ENCODE measurements at regions of chr10 and their contacts with region 1.

Region 1: DNA sequence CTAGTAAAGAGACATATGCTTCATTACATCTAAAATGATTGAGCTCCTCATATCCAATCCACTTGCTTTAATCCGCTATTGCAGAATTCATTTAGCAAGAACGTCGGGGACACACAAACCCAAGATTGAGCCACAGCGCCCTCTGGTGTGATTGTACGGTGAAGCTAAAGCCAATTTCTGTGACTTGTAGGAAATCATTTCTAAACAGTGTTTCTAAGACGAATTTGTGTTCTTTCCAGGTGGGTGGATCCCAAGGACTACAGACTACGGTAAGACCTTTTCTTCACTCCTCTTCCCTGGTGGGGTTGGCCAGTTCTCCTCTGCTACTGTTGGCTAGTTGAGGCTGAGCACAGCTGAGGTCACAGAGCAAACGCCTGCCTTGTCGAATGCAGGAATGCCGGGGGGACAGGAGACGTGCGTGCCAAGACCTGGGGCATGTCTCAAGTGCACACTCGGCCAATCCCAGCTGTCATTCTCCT is 5.2 kb downstream of the DMBT1 start:
- DNase-seq: peak; percentile 30 to 91 (median 79)
- H3K4me3 ChIP-seq: peak overlapping the region in 57 of 59 donors; percentile 5 to 69 (median 45)
- H3K27ac ChIP-seq: peak overlapping the region in 15 of 59 donors; percentile 0 to 75 (median 31)
- H3K27me3 ChIP-seq: peaks cover 0 to 8% (median 0%) of the 10 kb centered on the region in 45 donors
- CTCF ChIP-seq: peak; percentile 65 to 96 (median 89)

Region 2: GRCh38 chr10:122148876-122149560 is 416.7 kb before region 1 on chr10:
- intact Hi-C with region 1: loop called in 1 of 2 experiments (anchors 5 kb)
- DNase-seq: no peak
- H3K4me3 ChIP-seq: no peak overlapping the region
- H3K27ac ChIP-seq: peak overlapping the region in 27 of 59 donors; percentile 1 to 70 (median 37)
- H3K27me3 ChIP-seq: no peaks in the 10 kb centered on the region
- CTCF ChIP-seq: no peak

Region 3: DNA sequence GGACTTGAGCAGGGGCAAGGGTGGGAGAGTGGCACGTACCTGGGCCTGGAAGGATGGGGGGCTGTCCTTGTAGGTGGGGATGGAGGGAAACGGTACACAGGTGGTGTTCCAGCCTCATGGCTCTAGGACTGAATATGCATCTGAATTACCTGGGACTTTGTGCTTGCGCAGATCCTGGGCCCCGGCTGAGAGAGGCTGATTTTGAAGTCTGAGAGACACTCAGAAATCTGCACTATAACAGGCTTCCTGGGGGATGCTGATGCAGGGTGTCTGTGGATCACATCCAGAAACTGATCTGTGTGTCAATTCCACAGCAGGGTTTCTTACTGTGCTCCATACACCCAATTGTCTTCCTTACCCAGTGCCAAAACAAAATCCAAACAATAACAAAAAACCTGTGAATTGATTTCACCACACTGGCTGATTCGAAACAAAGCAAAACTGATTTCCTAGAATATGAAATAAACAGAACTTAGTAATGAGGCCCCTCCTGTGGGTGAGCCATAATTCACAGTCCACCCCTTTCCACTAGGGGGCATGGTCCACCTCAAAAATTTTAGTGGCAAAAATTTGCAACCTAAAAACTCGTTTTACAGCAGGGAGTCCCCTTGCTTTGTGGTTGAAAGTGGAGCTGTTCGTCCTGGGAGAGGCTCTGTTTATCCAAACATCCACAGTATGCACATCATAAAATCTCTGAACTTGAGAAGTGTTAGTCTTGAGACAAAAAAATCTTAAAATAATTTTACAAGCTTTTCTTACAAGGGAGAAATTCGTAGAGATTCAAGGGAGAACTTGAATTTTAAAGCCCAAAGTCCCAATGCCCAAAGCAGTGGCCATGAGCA is 223.3 kb before region 1 on chr10:
- intact Hi-C with region 1: loop called in 1 of 2 experiments (anchors 5 kb)
- DNase-seq: peak in 4 of 10 donors; percentile 9 to 63 (median 40)
- H3K4me3 ChIP-seq: no peak overlapping the region
- H3K27ac ChIP-seq: peak overlapping the region in 57 of 59 donors; percentile 3 to 98 (median 78)
- H3K27me3 ChIP-seq: no peaks in the 10 kb centered on the region
- CTCF ChIP-seq: peak; percentile 75 to 95 (median 90)

Region 4: GRCh38 chr10:122461367-122461728 is 104.4 kb before region 1 on chr10 and contains the start of gene HTRA1:
- intact Hi-C with region 1: loop called (anchors 5 to 10 kb)
- DNase-seq: peak; percentile 40 to 92 (median 84)
- H3K4me3 ChIP-seq: peak within 1 kb of the TSS; percentile 49 to 94 (median 84)
- H3K27ac ChIP-seq: peak within 1 kb of the TSS; percentile 74 to 98 (median 92)
- H3K27me3 ChIP-seq: no peaks in the 10 kb centered on the region
- CTCF ChIP-seq: no peak
- total RNA-seq, gene HTRA1: 154 to 492 (median 263) TPM

Region 5: GRCh38 chr10:122703439-122704118 is 137.8 kb after region 1 on chr10:
- intact Hi-C with region 1: loop called in 1 of 2 experiments (anchors 5 kb)
- DNase-seq: peak; percentile 30 to 88 (median 76)
- H3K4me3 ChIP-seq: no peak overlapping the region
- H3K27ac ChIP-seq: peak overlapping the region in 2 of 59 donors; percentile 57 to 75
- H3K27me3 ChIP-seq: peaks cover 0 to 4% (median 0%) of the 10 kb centered on the region in 45 donors
- CTCF ChIP-seq: peak in 55 of 56 donors; percentile 26 to 97 (median 89)

Measured in dorsolateral prefrontal cortex (tissue), 120 donors.